ENCODE measurements at regions of chr11 and their contacts with region 1.

Region 1: GRCh38 chr11:64246871-64247728 is at the start of gene PPP1R14B:
- DNase-seq: peak; percentile 84 to 86
- ATAC-seq: peak; percentile 52 to 62
- H3K4me3 ChIP-seq: peak within 1 kb of the TSS; percentile 80 to 98 (median 94)
- H3K27ac ChIP-seq: peak within 1 kb of the TSS; percentile 92 to 100 (median 96)
- H3K4me1 ChIP-seq: peaks cover 38 to 47% of the 10 kb centered on the region in 2 donors
- H3K27me3 ChIP-seq: no peaks in the 10 kb centered on the region
- CTCF ChIP-seq: peak in 4 of 5 experiments; percentile 25 to 31 (median 28)
- POLR2A ChIP-seq: peak; percentile 49 to 64
- total RNA-seq, gene PPP1R14B: 144 to 444 (median 237) TPM

Region 2: DNA sequence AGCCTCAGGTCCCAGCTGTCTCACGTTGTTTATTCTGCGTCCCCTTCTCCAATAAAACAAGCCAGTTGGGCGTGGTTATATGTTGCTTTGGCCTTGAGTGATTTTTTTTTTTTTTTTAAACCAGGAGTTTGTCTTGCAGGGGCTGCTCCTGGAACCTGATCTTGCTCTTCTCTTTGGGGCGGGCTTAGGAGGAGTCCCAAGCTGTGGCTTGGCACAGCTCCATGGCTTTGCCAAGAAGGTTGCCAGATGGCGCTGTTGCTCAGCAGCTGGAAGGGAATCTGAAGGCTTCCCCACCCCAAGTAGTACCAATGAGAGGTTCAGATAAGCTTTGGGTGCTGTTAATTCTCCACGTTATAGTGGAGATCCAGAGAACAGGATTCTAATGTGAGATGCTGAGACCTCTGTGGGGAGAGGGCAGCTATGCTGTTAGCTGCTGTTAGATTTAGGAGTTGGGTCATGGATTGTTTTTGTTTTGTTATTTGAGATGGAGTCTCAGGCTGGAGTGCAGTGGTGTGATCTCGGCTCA is 42.6 kb before region 1 on chr11:
- in situ Hi-C with region 1: no loop called
- intact Hi-C with region 1: loop called (anchors 1 kb)
- DNase-seq: peak; percentile 76 to 88
- ATAC-seq: peak; percentile 92 to 96
- H3K4me3 ChIP-seq: no peak overlapping the region
- H3K27ac ChIP-seq: peak overlapping the region; percentile 24 to 78 (median 26)
- H3K4me1 ChIP-seq: peaks cover 17 to 22% of the 10 kb centered on the region in 2 donors
- H3K27me3 ChIP-seq: no peaks in the 10 kb centered on the region
- CTCF ChIP-seq: peak; percentile 55 to 80 (median 69)
- POLR2A ChIP-seq: no peak

Region 3: GRCh38 chr11:64225612-64226506 is 21.2 kb before region 1 on chr11 and contains the starts of genes NUDT22 and TRPT1:
- in situ Hi-C with region 1: no loop called
- intact Hi-C with region 1: loop called (anchors 1 kb)
- DNase-seq: peak; percentile 85 to 90
- ATAC-seq: peak; percentile 70 to 72
- H3K4me3 ChIP-seq: peak within 1 kb of the TSS; percentile 86 to 92 (median 88)
- H3K27ac ChIP-seq: peak within 1 kb of the TSS; percentile 95 to 99 (median 96)
- H3K4me1 ChIP-seq: peaks cover 44 to 58% of the 10 kb centered on the region in 2 donors
- H3K27me3 ChIP-seq: no peaks in the 10 kb centered on the region
- CTCF ChIP-seq: peak in 4 of 5 experiments; percentile 6 to 37 (median 32)
- POLR2A ChIP-seq: peak; percentile 91 to 98
- total RNA-seq, gene NUDT22: 32.3 to 70.7 (median 53.4) TPM
- total RNA-seq, gene TRPT1: 80.9 to 231 (median 139) TPM

Region 4: GRCh38 chr11:64304316-64305072 is 57.4 kb after region 1 on chr11:
- in situ Hi-C with region 1: no loop called
- intact Hi-C with region 1: loop called (anchors 1 kb)
- DNase-seq: peak; percentile 77 to 91
- ATAC-seq: peak; percentile 36 to 53
- H3K4me3 ChIP-seq: peak overlapping the region; percentile 58 to 92 (median 64)
- H3K27ac ChIP-seq: peak overlapping the region; percentile 84 to 96 (median 90)
- H3K4me1 ChIP-seq: peaks cover 16 to 34% of the 10 kb centered on the region in 2 donors
- H3K27me3 ChIP-seq: peaks cover 16 to 26% (median 24%) of the 10 kb centered on the region in 3 donors
- CTCF ChIP-seq: peak; percentile 77 to 92 (median 88)
- POLR2A ChIP-seq: no peak

Region 5: DNA sequence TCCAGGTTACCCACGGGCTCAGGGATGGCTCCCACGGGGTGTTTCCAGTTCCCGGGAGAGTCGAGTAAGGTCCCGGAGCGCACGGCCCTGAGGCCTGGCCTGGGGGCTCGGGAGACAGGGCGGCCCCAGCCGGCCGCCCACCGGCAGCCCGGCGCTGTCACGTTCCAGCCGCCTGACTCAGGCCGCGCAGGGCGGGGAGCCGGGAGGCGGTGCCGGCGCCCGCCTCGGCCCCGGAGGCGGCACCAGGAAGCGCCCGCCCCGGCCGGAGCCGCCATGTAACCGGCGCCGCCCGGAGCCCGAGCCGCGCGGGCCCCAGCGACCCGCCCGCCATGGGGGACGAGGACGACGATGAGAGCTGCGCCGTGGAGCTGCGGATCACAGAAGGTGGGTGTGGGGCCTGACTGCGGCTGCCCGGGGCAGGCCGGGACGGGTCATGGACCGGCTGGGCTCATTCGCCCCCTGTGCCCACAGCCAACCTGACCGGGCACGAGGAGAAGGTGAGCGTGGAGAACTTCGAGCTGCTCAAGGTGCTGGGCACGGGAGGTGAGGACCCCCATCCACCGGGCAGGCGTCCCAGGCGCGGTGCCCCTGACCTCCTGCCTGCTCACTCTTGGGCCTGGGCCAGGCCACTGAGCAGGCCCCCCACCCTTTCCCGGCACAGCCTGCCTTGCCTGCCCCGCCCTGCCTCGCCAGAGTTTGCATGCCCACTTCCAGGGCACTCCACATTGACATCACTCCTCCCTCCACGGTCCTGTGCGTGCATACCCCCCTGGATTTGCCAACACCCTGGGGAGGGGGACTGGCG is 112.0 kb after region 1 on chr11 and contains the start of gene RPS6KA4:
- in situ Hi-C with region 1: no loop called
- intact Hi-C with region 1: no loop called
- DNase-seq: peak in 1 of 2 donors; percentile 37
- ATAC-seq: peak; percentile 80 to 83
- H3K4me3 ChIP-seq: peak within 1 kb of the TSS; percentile 60 to 84 (median 68)
- H3K27ac ChIP-seq: peak within 1 kb of the TSS; percentile 80 to 91 (median 86)
- H3K4me1 ChIP-seq: peaks cover 5 to 26% of the 10 kb centered on the region in 2 donors
- H3K27me3 ChIP-seq: no peaks in the 10 kb centered on the region
- CTCF ChIP-seq: peak in 3 of 5 experiments; percentile 5 to 12 (median 6)
- POLR2A ChIP-seq: peak; percentile 72 to 85
- total RNA-seq, gene RPS6KA4: 16.6 to 27.0 (median 17.2) TPM

Measured in gastrocnemius medialis (tissue), 4 donors.